Activated CD8-positive, alpha-beta memory T cell treated with anti-CD3 and anti-CD28 coated beads, Interleukin-2, amount 10 ng/mL, durations not matched to agents 7 days and 5 days (primary cell): ENCODE measurements at regions of chr10 and their contacts with region 1.

Region 1: GRCh38 chr10:101141616-101142532 is 10.8 kb downstream of the TLX1 start:
- DNase-seq: peak; percentile 84
- ATAC-seq: peak; percentile 93
- H3K4me3 Mint-ChIP-seq: no peak overlapping the region
- H3K27ac Mint-ChIP-seq: no peak overlapping the region
- H3K4me1 Mint-ChIP-seq: peaks cover 10% of the 10 kb centered on the region
- H3K27me3 Mint-ChIP-seq: peaks cover 96% of the 10 kb centered on the region

Region 2: DNA sequence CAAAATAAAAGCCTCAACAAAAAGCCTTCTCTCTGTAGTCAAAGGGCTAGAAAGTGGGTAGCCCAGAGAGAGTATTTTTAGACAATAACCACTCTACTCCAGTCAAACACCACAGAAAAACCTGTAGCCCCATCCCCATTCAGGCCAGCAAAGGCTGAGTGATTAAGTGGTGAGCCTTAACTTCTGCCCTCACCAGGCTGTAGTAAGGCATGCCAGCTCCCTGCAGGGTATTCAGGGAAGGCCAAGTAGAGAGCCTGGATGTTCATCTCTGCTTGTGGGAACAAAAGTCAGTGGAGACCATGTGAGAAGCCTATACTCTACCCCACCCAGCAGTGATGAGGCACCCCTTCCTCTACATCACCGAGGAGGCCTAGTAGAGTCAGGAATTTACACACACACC is 554.9 kb before region 1 on chr10:
- CTCF ChIA-PET with region 1: no interaction called
- DNase-seq: no peak
- ATAC-seq: no peak
- H3K4me3 Mint-ChIP-seq: no peak overlapping the region
- H3K27ac Mint-ChIP-seq: no peak overlapping the region
- H3K4me1 Mint-ChIP-seq: no peaks in the 10 kb centered on the region
- H3K27me3 Mint-ChIP-seq: peaks cover 70% of the 10 kb centered on the region

Region 3: GRCh38 chr10:101018600-101019439 is 123.1 kb before region 1 on chr10:
- CTCF ChIA-PET with region 1: interaction called, 14 read pairs
- DNase-seq: peak; percentile 88
- ATAC-seq: peak; percentile 87
- H3K4me3 Mint-ChIP-seq: no peak overlapping the region
- H3K27ac Mint-ChIP-seq: no peak overlapping the region
- H3K4me1 Mint-ChIP-seq: peaks cover 23% of the 10 kb centered on the region
- H3K27me3 Mint-ChIP-seq: peaks cover 40% of the 10 kb centered on the region

Region 4: GRCh38 chr10:101050208-101051069 is 91.4 kb before region 1 on chr10:
- CTCF ChIA-PET with region 1: interaction called, 38 read pairs
- DNase-seq: peak; percentile 84
- ATAC-seq: peak; percentile 93
- H3K4me3 Mint-ChIP-seq: no peak overlapping the region
- H3K27ac Mint-ChIP-seq: no peak overlapping the region
- H3K4me1 Mint-ChIP-seq: peaks cover 27% of the 10 kb centered on the region
- H3K27me3 Mint-ChIP-seq: peaks cover 54% of the 10 kb centered on the region

Region 5: DNA sequence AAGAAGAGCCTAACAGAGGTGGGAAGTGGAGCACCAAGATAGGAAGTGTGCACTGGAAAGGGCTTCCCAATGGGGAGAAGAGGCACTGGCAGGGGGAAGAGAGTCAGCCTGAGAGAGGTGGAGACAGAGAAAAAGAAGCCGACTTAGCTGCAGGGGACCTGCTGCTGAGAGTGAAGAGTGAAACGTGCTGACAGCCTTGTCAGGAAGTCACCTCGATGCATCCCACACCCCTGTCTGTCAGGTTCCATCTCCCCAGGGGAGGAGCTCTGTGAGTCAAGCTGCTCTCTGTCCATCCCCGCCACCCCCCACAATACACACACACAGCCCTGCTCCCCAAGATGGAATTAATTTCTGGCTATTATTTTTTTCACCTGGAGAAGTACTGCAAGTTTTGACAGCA is 66.1 kb before region 1 on chr10:
- CTCF ChIA-PET with region 1: interaction called, 19 read pairs
- DNase-seq: no peak
- ATAC-seq: peak; percentile 55
- H3K4me3 Mint-ChIP-seq: no peak overlapping the region
- H3K27ac Mint-ChIP-seq: no peak overlapping the region
- H3K4me1 Mint-ChIP-seq: no peaks in the 10 kb centered on the region
- H3K27me3 Mint-ChIP-seq: peaks cover 59% of the 10 kb centered on the region

Region 6: DNA sequence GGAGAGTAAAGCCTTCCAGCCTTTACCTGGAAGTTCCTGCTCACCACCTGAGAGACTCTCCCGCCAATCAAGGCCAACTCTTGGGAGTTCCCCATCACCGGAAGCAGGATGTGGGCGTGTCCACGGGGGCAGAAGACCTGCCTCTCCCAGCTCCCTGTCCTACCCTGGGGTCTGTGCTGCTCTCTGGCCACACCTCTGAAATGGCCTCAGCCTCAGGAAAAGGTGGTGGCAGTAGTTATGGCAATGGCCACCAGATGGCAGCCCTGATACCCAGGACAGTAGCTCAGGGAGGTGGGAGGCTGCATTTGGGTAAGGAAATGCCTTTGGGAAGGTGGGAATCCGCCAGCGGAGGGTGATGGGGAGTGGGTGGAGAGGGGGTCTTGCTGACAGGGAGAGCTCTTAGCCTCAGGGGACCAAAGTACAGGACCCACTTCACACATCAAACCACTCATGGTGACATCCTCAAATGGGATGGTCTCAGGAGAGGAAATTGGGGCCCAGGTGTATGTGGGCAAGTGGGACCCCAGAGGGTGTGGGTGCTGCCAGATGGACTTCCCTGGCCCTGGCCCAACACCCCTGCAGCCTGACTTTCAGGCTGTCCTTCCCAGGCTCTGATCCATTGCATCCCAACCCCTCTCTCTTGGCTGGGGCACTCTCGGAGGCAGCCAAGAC is 46.2 kb before region 1 on chr10:
- CTCF ChIA-PET with region 1: interaction called, 358 read pairs
- DNase-seq: peak; percentile 83
- ATAC-seq: peak; percentile 91
- H3K4me3 Mint-ChIP-seq: no peak overlapping the region
- H3K27ac Mint-ChIP-seq: no peak overlapping the region
- H3K4me1 Mint-ChIP-seq: no peaks in the 10 kb centered on the region
- H3K27me3 Mint-ChIP-seq: peaks cover 36% of the 10 kb centered on the region

Region 7: GRCh38 chr10:101120884-101121653 is 20.8 kb before region 1 on chr10:
- CTCF ChIA-PET with region 1: interaction called, 95 read pairs
- DNase-seq: peak; percentile 57
- ATAC-seq: peak; percentile 88
- H3K4me3 Mint-ChIP-seq: peak overlapping the region; percentile 77
- H3K27ac Mint-ChIP-seq: peak overlapping the region; percentile 70
- H3K4me1 Mint-ChIP-seq: peaks cover 23% of the 10 kb centered on the region
- H3K27me3 Mint-ChIP-seq: peaks cover 78% of the 10 kb centered on the region

Region 8: GRCh38 chr10:101161494-101162299 is 19.8 kb after region 1 on chr10:
- CTCF ChIA-PET with region 1: interaction called, 33 read pairs
- DNase-seq: peak; percentile 74
- ATAC-seq: peak; percentile 68
- H3K4me3 Mint-ChIP-seq: no peak overlapping the region
- H3K27ac Mint-ChIP-seq: no peak overlapping the region
- H3K4me1 Mint-ChIP-seq: peaks cover 16% of the 10 kb centered on the region
- H3K27me3 Mint-ChIP-seq: peaks cover 84% of the 10 kb centered on the region